Activated T-helper 2 cell treated with anti-CD3 and anti-CD28 coated beads, Interferon-gamma antibody, Interleukin-2, Interleukin-4, amounts not matched to agents 10 μg/mL and 5 μg/mL and 100 μg/mL, durations not matched to agents 14 hours and 24 hours and 36 hours (primary cell): ENCODE measurements at regions of chr1 and their contacts with region 1.

Region 1: DNA sequence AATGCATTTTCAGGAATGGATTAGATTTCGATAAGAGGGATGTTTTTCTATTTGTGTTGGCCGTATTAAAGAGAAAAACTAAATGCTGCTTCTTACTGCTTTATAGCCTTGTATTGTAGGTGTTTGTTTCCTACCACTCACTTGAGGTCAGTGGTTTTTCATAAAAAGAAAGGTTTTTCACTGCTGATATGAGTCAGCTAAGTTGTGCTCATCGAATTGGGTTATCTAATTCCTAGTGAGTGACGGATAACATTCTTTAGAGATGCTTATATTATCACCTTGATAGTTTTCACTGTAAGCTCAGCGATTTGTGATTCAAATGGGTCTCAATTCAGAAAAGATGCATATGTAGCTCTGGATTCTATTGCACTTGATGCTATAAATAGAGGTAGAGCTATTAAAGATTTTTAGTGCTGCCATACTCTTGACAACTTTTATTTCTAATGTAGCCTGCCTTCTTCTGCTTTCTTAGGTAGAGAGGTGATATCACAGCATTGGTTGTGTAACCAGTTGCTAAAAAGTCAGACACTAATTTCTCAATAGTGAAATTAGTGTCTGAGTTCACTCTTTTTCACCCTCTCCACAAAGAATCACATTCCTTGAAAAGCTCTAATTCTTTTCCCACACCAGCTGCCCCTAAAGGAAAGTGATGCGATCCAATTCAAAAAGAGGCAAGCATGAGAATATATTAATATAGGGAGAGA is 180.0 kb downstream of the RASAL2 start:
- DNase-seq: no peak
- H3K4me3 Mint-ChIP-seq: no peak overlapping the region
- H3K27ac Mint-ChIP-seq: no peak overlapping the region
- H3K4me1 Mint-ChIP-seq: peaks cover 13% of the 10 kb centered on the region
- H3K27me3 Mint-ChIP-seq: no peaks in the 10 kb centered on the region

Region 2: GRCh38 chr1:178263341-178263740 is 10.5 kb before region 1 on chr1:
- intact Hi-C with region 1: loop called (anchors 1 kb)
- DNase-seq: no peak
- H3K4me3 Mint-ChIP-seq: no peak overlapping the region
- H3K27ac Mint-ChIP-seq: peak overlapping the region; percentile 52
- H3K4me1 Mint-ChIP-seq: peaks cover 10% of the 10 kb centered on the region
- H3K27me3 Mint-ChIP-seq: no peaks in the 10 kb centered on the region